ENCODE measurements at regions of chr15 and their contacts with region 1.

Region 1: GRCh38 chr15:32956006-32956405 is 238.2 kb downstream of the GREM1 start:
- DNase-seq: peak; percentile 31
- H3K4me3 ChIP-seq: no peak overlapping the region
- H3K27me3 ChIP-seq: no peaks in the 10 kb centered on the region
- CTCF ChIP-seq: peak; percentile 75

Region 2: DNA sequence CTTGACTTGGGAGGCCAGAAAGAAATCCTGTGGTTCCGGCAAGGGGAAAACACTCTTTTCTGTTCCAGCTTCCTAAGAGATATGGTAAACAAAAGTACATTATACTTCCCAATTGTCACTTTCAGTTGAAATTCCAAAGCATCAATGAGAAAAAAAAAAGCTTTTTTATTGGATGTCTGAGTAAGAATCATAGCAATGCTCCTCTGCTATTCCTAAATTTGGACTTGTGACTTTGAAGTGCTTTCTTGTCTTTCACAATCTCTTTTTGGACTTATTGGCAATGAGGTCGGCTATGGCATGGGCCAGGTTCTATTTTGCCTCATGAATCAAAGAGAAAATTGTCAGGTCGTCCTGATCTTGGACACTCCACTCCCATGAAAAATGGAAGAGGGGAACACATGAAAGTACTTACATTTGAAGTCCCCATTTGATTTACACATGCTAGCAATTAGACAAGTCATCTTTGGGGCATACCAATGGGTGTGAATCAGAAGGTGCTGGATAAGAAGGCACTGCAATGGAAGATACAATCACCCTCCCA is 67.7 kb before region 1 on chr15:
- CTCF ChIA-PET with region 1: interaction called, 7 read pairs
- POLR2A ChIA-PET with region 1: interaction called, 13 read pairs
- DNase-seq: peak; percentile 95
- H3K4me3 ChIP-seq: no peak overlapping the region
- H3K27me3 ChIP-seq: no peaks in the 10 kb centered on the region
- CTCF ChIP-seq: no peak

Region 3: DNA sequence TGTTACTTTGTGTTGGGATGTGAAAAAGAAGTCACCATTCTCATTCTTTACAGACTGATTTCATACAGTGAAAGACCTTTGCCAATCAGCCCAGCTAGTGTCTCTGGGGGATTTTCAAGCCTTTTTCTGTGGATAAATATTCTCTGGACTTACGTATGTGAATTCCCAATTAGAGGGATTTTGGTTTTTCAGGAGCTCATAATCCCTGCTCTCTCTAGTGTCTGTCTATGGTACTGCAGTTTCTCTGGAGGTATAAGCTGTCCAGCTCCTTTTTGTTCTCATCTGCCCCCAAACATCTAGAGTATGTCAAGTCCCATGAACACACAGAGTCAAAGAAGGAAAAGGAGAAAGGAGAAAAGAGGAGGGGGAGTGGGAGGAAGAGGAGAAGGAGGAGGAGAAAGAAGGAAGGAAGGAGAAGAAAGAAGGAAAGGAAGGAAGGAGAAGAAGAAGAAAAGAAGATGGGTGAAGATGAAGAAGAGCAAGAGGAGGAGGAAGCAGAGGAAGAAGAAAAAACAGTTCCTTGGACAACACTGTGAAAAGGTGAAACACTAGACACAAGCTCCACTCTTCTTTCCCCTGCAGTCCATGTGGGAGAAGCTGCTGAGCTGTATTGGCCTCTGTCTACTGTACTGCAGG is 19.6 kb before region 1 on chr15:
- CTCF ChIA-PET with region 1: interaction called, 14 read pairs
- POLR2A ChIA-PET with region 1: no interaction called
- DNase-seq: no peak
- H3K4me3 ChIP-seq: no peak overlapping the region
- H3K27me3 ChIP-seq: no peaks in the 10 kb centered on the region
- CTCF ChIP-seq: peak; percentile 56

Region 4: DNA sequence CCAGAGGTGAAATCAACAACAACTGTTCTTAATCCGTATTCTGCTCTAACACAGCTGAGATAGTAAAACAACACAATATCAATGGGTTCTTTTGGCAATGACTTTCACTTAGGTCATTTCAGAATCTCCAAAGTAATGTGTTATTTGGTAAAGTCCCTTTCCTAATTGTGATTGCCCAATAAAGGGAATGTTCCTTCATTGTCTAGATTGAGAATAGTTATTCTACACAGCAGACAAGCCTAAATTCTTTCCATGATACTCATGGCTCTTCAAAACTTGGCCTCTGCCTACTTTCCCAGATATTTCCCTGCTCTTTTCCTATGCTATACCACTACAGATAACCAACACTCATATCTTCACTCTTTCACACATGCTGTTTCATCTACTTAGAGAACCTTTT is 18.7 kb after region 1 on chr15:
- CTCF ChIA-PET with region 1: interaction called, 10 read pairs
- POLR2A ChIA-PET with region 1: interaction called, 13 read pairs
- DNase-seq: no peak
- H3K4me3 ChIP-seq: no peak overlapping the region
- H3K27me3 ChIP-seq: no peaks in the 10 kb centered on the region
- CTCF ChIP-seq: no peak

Measured in BJ (cell line).